ENCODE measurements at regions of chr15 and their contacts with region 1.

Region 1: DNA sequence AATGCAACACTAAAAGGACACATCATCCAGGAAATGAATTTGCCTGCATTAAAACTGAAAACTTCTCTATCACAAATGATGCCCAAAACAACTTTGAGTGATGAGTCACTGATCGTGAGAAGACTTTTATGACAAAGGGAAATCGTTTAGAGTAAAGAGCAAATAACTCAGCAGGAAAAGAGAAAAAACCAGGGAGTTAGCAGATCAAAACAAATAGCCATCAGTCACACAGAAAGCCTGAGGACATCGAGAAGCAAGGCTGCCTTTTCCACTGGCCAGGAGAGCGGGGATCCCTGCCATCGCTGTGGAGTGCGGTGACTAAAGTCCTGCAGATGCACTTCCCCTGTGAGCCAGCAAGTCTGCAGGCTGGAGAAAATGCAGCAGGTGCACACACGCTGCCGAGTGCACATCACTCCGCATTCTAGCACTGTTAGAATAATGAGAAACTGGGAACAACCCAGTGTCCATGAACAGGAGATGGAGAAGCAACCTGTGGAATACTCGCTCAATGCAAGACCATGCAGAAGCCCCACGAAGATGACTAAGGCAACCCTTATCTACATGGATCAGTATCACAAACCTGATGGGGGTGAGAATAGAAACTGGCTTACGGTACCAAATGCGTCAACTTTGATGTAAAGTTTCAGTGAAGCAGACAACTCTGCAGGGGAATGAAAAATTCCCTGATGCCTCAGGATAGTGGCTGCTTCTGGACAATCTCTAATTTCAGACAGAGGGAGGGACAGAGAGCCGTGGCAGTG is 86.4 kb downstream of the NSMCE3 start:
- DNase-seq: no peak
- H3K4me3 ChIP-seq: no peak overlapping the region
- H3K27ac ChIP-seq: no peak overlapping the region
- H3K4me1 ChIP-seq: no peaks in the 10 kb centered on the region
- H3K27me3 ChIP-seq: no peaks in the 10 kb centered on the region
- CTCF ChIP-seq: no peak
- EP300 ChIP-seq: no peak
- POLR2A ChIP-seq: no peak

Region 2: DNA sequence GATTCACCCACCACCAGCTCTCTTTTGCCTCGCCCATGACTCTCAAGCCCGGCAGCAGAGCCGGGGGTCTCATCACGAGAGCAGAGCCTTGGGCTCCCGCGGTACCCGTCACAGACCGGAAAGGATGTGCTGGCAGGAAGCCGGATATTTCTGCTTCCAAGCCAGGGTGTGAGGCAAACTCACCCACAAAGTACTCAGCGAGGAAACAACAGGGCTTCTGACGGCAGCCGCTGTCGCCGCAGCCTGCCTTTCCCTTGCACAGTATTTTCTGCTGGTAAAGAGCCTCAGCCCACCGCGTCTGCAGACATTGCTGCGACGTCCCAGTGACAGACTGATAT is 33.5 kb before region 1 on chr15:
- intact Hi-C with region 1: no loop called
- DNase-seq: no peak
- H3K4me3 ChIP-seq: no peak overlapping the region
- H3K27ac ChIP-seq: no peak overlapping the region
- H3K4me1 ChIP-seq: no peaks in the 10 kb centered on the region
- H3K27me3 ChIP-seq: no peaks in the 10 kb centered on the region
- CTCF ChIP-seq: no peak
- EP300 ChIP-seq: no peak
- POLR2A ChIP-seq: no peak

Region 3: GRCh38 chr15:29233566-29233965 is 50.3 kb after region 1 on chr15:
- intact Hi-C with region 1: loop called (anchors 5 kb)
- DNase-seq: no peak
- H3K4me3 ChIP-seq: no peak overlapping the region
- H3K27ac ChIP-seq: no peak overlapping the region
- H3K4me1 ChIP-seq: no peaks in the 10 kb centered on the region
- H3K27me3 ChIP-seq: no peaks in the 10 kb centered on the region
- CTCF ChIP-seq: no peak
- EP300 ChIP-seq: no peak
- POLR2A ChIP-seq: no peak